Heart left ventricle (tissue), 16 donors: ENCODE measurements at regions of chr6 and their contacts with region 1.

Region 1: DNA sequence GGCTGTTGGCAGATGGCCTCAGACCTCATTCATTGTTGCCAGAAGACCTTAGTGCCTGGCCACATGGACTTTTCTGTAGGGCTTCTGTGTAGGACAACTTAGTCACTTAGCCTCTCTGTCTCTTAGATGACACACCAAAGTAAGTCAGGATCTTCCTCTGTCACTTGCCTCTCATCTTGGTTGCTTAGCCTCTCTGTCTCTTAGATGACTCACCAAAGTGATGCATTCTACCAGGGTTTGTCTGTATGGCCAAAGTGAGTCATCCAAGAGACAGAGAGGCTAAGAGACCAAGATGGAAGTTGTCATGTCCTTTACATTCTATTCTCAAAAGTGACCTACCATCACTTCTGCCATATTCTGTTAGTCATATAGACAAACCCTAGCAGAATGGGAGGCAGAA is 255.9 kb upstream of the DEFB112 start:
- DNase-seq: no peak
- ATAC-seq: no peak
- H3K4me3 ChIP-seq: no peak overlapping the region
- H3K27ac ChIP-seq: no peak overlapping the region
- H3K4me1 ChIP-seq: no peaks in the 10 kb centered on the region
- H3K27me3 ChIP-seq: no peaks in the 10 kb centered on the region
- CTCF ChIP-seq: no peak
- POLR2A ChIP-seq: no peak

Region 2: GRCh38 chr6:49649988-49650387 is 655.7 kb before region 1 on chr6:
- intact Hi-C with region 1: loop called in 1 of 10 experiments (anchors 10 kb)
- DNase-seq: no peak
- ATAC-seq: no peak
- H3K4me3 ChIP-seq: no peak overlapping the region
- H3K27ac ChIP-seq: no peak overlapping the region
- H3K4me1 ChIP-seq: no peaks in the 10 kb centered on the region
- H3K27me3 ChIP-seq: no peaks in the 10 kb centered on the region
- CTCF ChIP-seq: no peak
- POLR2A ChIP-seq: no peak